ENCODE measurements at regions of chr4 and their contacts with region 1.

Region 1: GRCh38 chr4:39486221-39486804 is 27.5 kb downstream of the LIAS start:
- DNase-seq: no peak
- H3K4me3 ChIP-seq: no peak overlapping the region
- H3K27ac ChIP-seq: no peak overlapping the region
- H3K4me1 ChIP-seq: no peaks in the 10 kb centered on the region
- H3K27me3 ChIP-seq: no peaks in the 10 kb centered on the region
- CTCF ChIP-seq: no peak
- EP300 ChIP-seq: no peak
- POLR2A ChIP-seq: no peak
- RAD21 ChIP-seq: no peak

Region 2: GRCh38 chr4:39469429-39470077 is 16.8 kb before region 1 on chr4:
- CTCF ChIA-PET with region 1: interaction called, 11 read pairs
- POLR2A ChIA-PET with region 1: no interaction called
- DNase-seq: no peak
- H3K4me3 ChIP-seq: no peak overlapping the region
- H3K27ac ChIP-seq: no peak overlapping the region
- H3K4me1 ChIP-seq: no peaks in the 10 kb centered on the region
- H3K27me3 ChIP-seq: no peaks in the 10 kb centered on the region
- CTCF ChIP-seq: peak in 2 of 3 experiments; percentile 76 to 87; a peak in 3 of 4 replicates
- EP300 ChIP-seq: 0 out of 3 replicates have a peak, but pooled peaks of 1 of the 2 experiments have one; percentile 26
- POLR2A ChIP-seq: no peak
- RAD21 ChIP-seq: peak; percentile 78 to 86